HCT116 (cell line): ENCODE measurements at regions of chr11 and their contacts with region 1.

Region 1: GRCh38 chr11:120952461-120953434 is 71.2 kb upstream of the TBCEL start:
- DNase-seq: peak; percentile 61
- ATAC-seq: peak; percentile 97
- H3K4me3 ChIP-seq: peak overlapping the region in 1 of 2 experiments; percentile 11; a peak in 1 of 4 replicates
- H3K27ac ChIP-seq: no peak overlapping the region
- H3K4me1 ChIP-seq: peaks cover 0 to 9% of the 10 kb centered on the region in 2 experiments; a peak in 2 of 4 replicates
- H3K27me3 ChIP-seq: peaks cover 8% of the 10 kb centered on the region; the same call in 1 of the 2 replicates
- CTCF ChIP-seq: peak; percentile 87 to 91 (median 89)
- POLR2A ChIP-seq: no peak
- RAD21 ChIP-seq: peak; percentile 91

Region 2: GRCh38 chr11:120235024-120235861 is 717.5 kb before region 1 on chr11:
- CTCF ChIA-PET with region 1: no interaction called
- POLR2A ChIA-PET with region 1: no interaction called
- RAD21 ChIA-PET with region 1: no interaction called
- intact Hi-C with region 1: loop called (anchors 5 kb)
- DNase-seq: peak; percentile 64
- ATAC-seq: peak; percentile 92
- H3K4me3 ChIP-seq: no peak overlapping the region
- H3K27ac ChIP-seq: no peak overlapping the region
- H3K4me1 ChIP-seq: no peaks in the 10 kb centered on the region
- H3K27me3 ChIP-seq: no peaks in the 10 kb centered on the region; the same call in 1 of the 2 replicates
- CTCF ChIP-seq: peak; percentile 93 to 97 (median 93)
- POLR2A ChIP-seq: no peak
- RAD21 ChIP-seq: peak; percentile 98

Region 3: GRCh38 chr11:120335908-120336640 is 616.7 kb before region 1 on chr11 and contains the start of gene ARHGEF12:
- CTCF ChIA-PET with region 1: no interaction called
- POLR2A ChIA-PET with region 1: no interaction called
- RAD21 ChIA-PET with region 1: no interaction called
- intact Hi-C with region 1: loop called (anchors 5 kb)
- DNase-seq: peak; percentile 93
- ATAC-seq: peak; percentile 77
- H3K4me3 ChIP-seq: peak within 1 kb of the TSS; percentile 77 to 87
- H3K27ac ChIP-seq: peak within 1 kb of the TSS; percentile 91
- H3K4me1 ChIP-seq: peaks cover 58 to 76% of the 10 kb centered on the region in 2 experiments
- H3K27me3 ChIP-seq: no peaks in the 10 kb centered on the region
- CTCF ChIP-seq: peak; percentile 21 to 51 (median 49); a peak in 4 of 6 replicates
- POLR2A ChIP-seq: peak; percentile 60
- RAD21 ChIP-seq: peak; percentile 43
- total RNA-seq, gene ARHGEF12: 81.4 TPM

Region 4: DNA sequence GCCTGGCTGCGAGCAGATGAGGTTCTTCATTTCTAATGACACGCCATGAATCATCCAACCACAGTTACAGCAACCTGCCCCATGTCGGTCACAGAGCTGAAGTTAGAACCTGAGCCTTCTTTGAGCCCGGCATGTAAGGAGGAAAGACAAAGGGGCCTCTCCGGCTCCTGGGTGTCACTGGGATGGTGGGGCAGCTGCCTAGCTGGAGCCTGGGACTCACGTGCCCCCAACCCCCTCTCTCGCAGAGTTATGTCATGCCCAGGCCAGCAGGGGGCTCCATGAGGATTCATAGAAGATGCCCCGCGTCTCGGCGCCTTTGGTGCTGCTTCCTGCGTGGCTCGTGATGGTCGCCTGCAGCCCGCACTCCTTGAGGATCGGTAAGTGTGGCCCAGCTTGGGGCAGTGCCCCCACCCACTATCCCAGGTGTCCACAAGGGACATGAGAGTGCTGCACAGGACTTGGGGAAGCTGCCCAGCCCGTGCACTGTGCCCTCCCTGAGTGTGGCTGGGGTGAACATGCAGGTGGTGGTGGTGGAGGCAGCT is 292.7 kb before region 1 on chr11:
- CTCF ChIA-PET with region 1: no interaction called
- POLR2A ChIA-PET with region 1: no interaction called
- RAD21 ChIA-PET with region 1: no interaction called
- intact Hi-C with region 1: loop called (anchors 2 kb)
- DNase-seq: peak; percentile 46
- ATAC-seq: peak; percentile 89
- H3K4me3 ChIP-seq: peak overlapping the region in 1 of 2 experiments; percentile 13; a peak in 1 of 4 replicates
- H3K27ac ChIP-seq: no peak overlapping the region
- H3K4me1 ChIP-seq: peaks cover 0 to 14% of the 10 kb centered on the region in 2 experiments; a peak in 2 of 4 replicates
- H3K27me3 ChIP-seq: peaks cover 26% of the 10 kb centered on the region
- CTCF ChIP-seq: peak; percentile 67 to 86 (median 76)
- POLR2A ChIP-seq: no peak
- RAD21 ChIP-seq: peak; percentile 60

Region 5: DNA sequence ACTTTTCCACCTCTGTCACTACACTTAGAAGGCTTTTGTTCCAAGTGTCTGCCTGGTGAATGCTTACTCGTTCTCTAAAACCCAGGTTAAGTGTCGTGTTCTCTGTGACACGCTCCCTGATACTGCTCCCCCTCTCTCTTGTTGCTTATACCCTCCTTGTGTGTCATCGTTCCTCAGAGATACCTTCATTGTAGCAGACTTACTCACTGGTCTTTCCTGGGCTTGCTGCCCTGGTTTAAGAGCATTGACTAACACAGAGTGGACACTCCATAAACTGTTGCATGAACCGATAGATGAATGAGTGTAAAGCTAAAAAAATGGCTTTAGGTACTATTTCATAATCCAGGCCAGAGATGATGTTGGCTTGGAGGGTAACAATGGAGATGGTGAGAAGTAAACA is 269.9 kb before region 1 on chr11:
- CTCF ChIA-PET with region 1: interaction called, 4 read pairs
- POLR2A ChIA-PET with region 1: no interaction called
- RAD21 ChIA-PET with region 1: interaction called in 1 of 2 experiments, 4 read pairs
- intact Hi-C with region 1: loop called (anchors 10 kb)
- DNase-seq: no peak
- ATAC-seq: no peak
- H3K4me3 ChIP-seq: no peak overlapping the region
- H3K27ac ChIP-seq: no peak overlapping the region
- H3K4me1 ChIP-seq: no peaks in the 10 kb centered on the region
- H3K27me3 ChIP-seq: no peaks in the 10 kb centered on the region; the same call in 1 of the 2 replicates
- CTCF ChIP-seq: no peak
- POLR2A ChIP-seq: no peak
- RAD21 ChIP-seq: no peak

Region 6: GRCh38 chr11:120940160-120940848 is 12.4 kb before region 1 on chr11:
- CTCF ChIA-PET with region 1: no interaction called
- POLR2A ChIA-PET with region 1: no interaction called
- RAD21 ChIA-PET with region 1: no interaction called
- intact Hi-C with region 1: no loop called
- DNase-seq: no peak
- ATAC-seq: no peak
- H3K4me3 ChIP-seq: no peak overlapping the region
- H3K27ac ChIP-seq: no peak overlapping the region
- H3K4me1 ChIP-seq: no peaks in the 10 kb centered on the region
- H3K27me3 ChIP-seq: peaks cover 22% of the 10 kb centered on the region; the same call in 1 of the 2 replicates
- CTCF ChIP-seq: no peak
- POLR2A ChIP-seq: no peak
- RAD21 ChIP-seq: no peak

Region 7: GRCh38 chr11:121194731-121195596 is 242.2 kb after region 1 on chr11:
- CTCF ChIA-PET with region 1: interaction called, 14 read pairs
- POLR2A ChIA-PET with region 1: no interaction called
- RAD21 ChIA-PET with region 1: no interaction called
- intact Hi-C with region 1: no loop called
- DNase-seq: peak; percentile 63
- ATAC-seq: peak; percentile 99
- H3K4me3 ChIP-seq: peak overlapping the region; percentile 1 to 27; a peak in 2 of 4 replicates
- H3K27ac ChIP-seq: no peak overlapping the region
- H3K4me1 ChIP-seq: peaks cover 0 to 7% of the 10 kb centered on the region in 2 experiments; a peak in 2 of 4 replicates
- H3K27me3 ChIP-seq: no peaks in the 10 kb centered on the region; the same call in 1 of the 2 replicates
- CTCF ChIP-seq: peak; percentile 71 to 84 (median 76)
- POLR2A ChIP-seq: no peak
- RAD21 ChIP-seq: peak; percentile 91